IMR-90 (cell line): ENCODE measurements at regions of chr2 and their contacts with region 1.

Region 1: GRCh38 chr2:37877457-37878315 is 47.4 kb upstream of the RMDN2 start:
- DNase-seq: peak; percentile 68
- ATAC-seq: peak; percentile 93
- H3K4me3 ChIP-seq: no peak overlapping the region
- H3K27ac ChIP-seq: no peak overlapping the region
- H3K4me1 ChIP-seq: no peaks in the 10 kb centered on the region
- H3K27me3 ChIP-seq: peaks cover 4% of the 10 kb centered on the region; the same call in 1 of the 2 replicates
- CTCF ChIP-seq: peak; percentile 82
- POLR2A ChIP-seq: no peak
- RAD21 ChIP-seq: peak; percentile 95

Region 2: DNA sequence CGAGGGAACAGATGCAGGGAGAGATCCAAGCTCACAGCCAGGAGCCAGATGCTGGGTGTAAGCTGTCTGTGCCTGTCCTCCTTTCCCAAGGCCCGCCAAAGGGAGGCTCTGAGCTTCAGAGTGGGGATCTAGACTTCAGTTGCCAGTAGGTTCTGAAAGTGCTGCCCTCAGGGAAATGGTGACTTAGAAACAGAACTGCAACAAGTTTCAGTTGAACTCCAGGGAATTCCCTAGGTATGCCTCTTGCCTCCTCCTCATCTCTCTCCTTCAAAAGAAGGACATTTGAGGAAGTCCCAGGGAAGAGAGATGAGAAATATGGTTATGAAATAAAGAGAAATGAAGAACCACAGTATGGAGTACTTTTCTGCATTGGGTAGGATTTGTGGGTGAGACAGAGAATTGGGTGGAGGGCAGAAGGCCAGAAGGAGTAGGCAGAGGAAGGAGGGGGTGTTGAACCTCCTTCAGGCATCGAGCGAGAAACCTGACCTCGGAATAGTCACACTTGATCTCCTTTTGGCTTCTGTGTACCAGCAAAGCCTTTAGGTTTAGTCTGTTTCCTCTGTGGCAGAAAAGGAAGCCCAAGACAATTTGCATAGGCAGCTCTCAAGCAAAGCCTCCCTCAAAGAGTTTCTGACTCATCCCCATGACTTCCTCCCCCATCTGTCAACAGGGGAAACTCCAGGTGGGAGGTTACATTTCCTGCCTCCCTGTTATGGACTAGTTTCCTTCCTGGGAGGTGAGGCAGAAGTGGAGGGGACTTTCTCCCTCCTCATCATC is 487.5 kb before region 1 on chr2:
- CTCF ChIA-PET with region 1: interaction called, 24 read pairs
- POLR2A ChIA-PET with region 1: no interaction called
- dilution Hi-C with region 1: no loop called
- in situ Hi-C with region 1: loop called (anchors 5 kb)
- intact Hi-C with region 1: no loop called
- DNase-seq: peak; percentile 96
- ATAC-seq: peak; percentile 60
- H3K4me3 ChIP-seq: no peak overlapping the region
- H3K27ac ChIP-seq: peak overlapping the region; percentile 26
- H3K4me1 ChIP-seq: peaks cover 27% of the 10 kb centered on the region
- H3K27me3 ChIP-seq: no peaks in the 10 kb centered on the region
- CTCF ChIP-seq: no peak
- POLR2A ChIP-seq: 0 out of 2 replicates have a peak, but pooled peaks have one; percentile 25
- RAD21 ChIP-seq: no peak

Region 3: GRCh38 chr2:37500031-37500430 is 377.7 kb before region 1 on chr2:
- CTCF ChIA-PET with region 1: interaction called, 10 read pairs
- POLR2A ChIA-PET with region 1: no interaction called
- dilution Hi-C with region 1: no loop called
- in situ Hi-C with region 1: no loop called
- intact Hi-C with region 1: no loop called
- DNase-seq: peak; percentile 96
- ATAC-seq: peak; percentile 96
- H3K4me3 ChIP-seq: no peak overlapping the region
- H3K27ac ChIP-seq: peak overlapping the region; percentile 2; the same call in 1 of the 2 replicates
- H3K4me1 ChIP-seq: peaks cover 2% of the 10 kb centered on the region; the same call in 1 of the 2 replicates
- H3K27me3 ChIP-seq: no peaks in the 10 kb centered on the region
- CTCF ChIP-seq: no peak
- POLR2A ChIP-seq: no peak
- RAD21 ChIP-seq: 0 out of 2 replicates have a peak, but pooled peaks have one; percentile 21

Region 4: DNA sequence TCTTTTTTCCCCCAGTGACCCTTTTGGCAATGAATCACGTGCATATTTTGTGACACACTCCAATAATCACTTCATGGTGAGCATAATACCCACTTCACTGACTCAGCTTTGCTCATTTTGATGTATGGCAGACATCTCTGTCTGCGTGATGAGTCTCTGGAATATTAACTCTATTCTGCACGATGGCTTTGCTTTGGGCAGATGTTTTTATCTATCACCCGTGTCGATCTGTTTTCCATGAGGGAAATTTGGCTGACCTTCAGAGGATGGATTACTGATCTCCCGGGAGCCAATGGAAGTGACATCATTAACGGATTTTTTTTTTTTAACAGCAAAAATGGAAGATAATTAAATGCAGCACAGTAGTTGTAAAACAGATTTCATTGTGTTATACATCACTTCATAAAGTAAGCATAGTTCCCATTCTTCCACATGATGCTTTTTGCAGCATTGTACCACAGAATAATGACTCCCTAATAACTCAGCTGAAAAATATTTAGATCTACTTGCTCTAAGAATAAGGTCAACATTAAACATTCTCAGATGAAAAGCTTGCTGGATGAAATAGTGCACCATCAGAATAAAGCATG is 236.0 kb before region 1 on chr2:
- CTCF ChIA-PET with region 1: interaction called, 3 read pairs
- POLR2A ChIA-PET with region 1: no interaction called
- dilution Hi-C with region 1: no loop called
- in situ Hi-C with region 1: no loop called
- intact Hi-C with region 1: loop called (anchors 1 kb)
- DNase-seq: peak; percentile 82
- ATAC-seq: no peak
- H3K4me3 ChIP-seq: no peak overlapping the region
- H3K27ac ChIP-seq: peak overlapping the region; percentile 33; the same call in 1 of the 2 replicates
- H3K4me1 ChIP-seq: peaks cover 20% of the 10 kb centered on the region
- H3K27me3 ChIP-seq: no peaks in the 10 kb centered on the region
- CTCF ChIP-seq: no peak
- POLR2A ChIP-seq: no peak
- RAD21 ChIP-seq: no peak

Region 5: GRCh38 chr2:37672104-37672869 is 205.4 kb before region 1 on chr2:
- CTCF ChIA-PET with region 1: no interaction called
- POLR2A ChIA-PET with region 1: no interaction called
- dilution Hi-C with region 1: no loop called
- in situ Hi-C with region 1: no loop called
- intact Hi-C with region 1: loop called (anchors 1 kb)
- DNase-seq: peak; percentile 88
- ATAC-seq: peak; percentile 53
- H3K4me3 ChIP-seq: peak overlapping the region; percentile 99
- H3K27ac ChIP-seq: peak overlapping the region; percentile 87
- H3K4me1 ChIP-seq: peaks cover 7% of the 10 kb centered on the region
- H3K27me3 ChIP-seq: no peaks in the 10 kb centered on the region
- CTCF ChIP-seq: no peak
- POLR2A ChIP-seq: no peak
- RAD21 ChIP-seq: no peak; the same call in 1 of the 2 replicates

Region 6: GRCh38 chr2:37767956-37768925 is 109.4 kb before region 1 on chr2:
- CTCF ChIA-PET with region 1: interaction called, 13 read pairs
- POLR2A ChIA-PET with region 1: no interaction called
- dilution Hi-C with region 1: no loop called
- in situ Hi-C with region 1: no loop called
- intact Hi-C with region 1: loop called (anchors 2 kb)
- DNase-seq: peak; percentile 92
- ATAC-seq: peak; percentile 86
- H3K4me3 ChIP-seq: no peak overlapping the region
- H3K27ac ChIP-seq: peak overlapping the region; percentile 97
- H3K4me1 ChIP-seq: peaks cover 37% of the 10 kb centered on the region
- H3K27me3 ChIP-seq: no peaks in the 10 kb centered on the region
- CTCF ChIP-seq: no peak
- POLR2A ChIP-seq: no peak
- RAD21 ChIP-seq: no peak